Psoas muscle (tissue), 8 donors: ENCODE measurements at regions of chr7 and their contacts with region 1.

Region 1: GRCh38 chr7:88243345-88243909 is 23.6 kb upstream of the SRI start:
- DNase-seq: no peak
- ATAC-seq: peak in 3 of 4 donors; percentile 34 to 61 (median 42)
- H3K4me3 ChIP-seq: no peak overlapping the region
- H3K27ac ChIP-seq: no peak overlapping the region
- H3K4me1 ChIP-seq: no peaks in the 10 kb centered on the region
- H3K27me3 ChIP-seq: no peaks in the 10 kb centered on the region
- CTCF ChIP-seq: peak; percentile 60

Region 2: GRCh38 chr7:88289564-88290025 is 46.2 kb after region 1 on chr7:
- intact Hi-C with region 1: no loop called
- DNase-seq: no peak
- ATAC-seq: no peak
- H3K4me3 ChIP-seq: no peak overlapping the region
- H3K27ac ChIP-seq: no peak overlapping the region
- H3K4me1 ChIP-seq: no peaks in the 10 kb centered on the region
- H3K27me3 ChIP-seq: no peaks in the 10 kb centered on the region
- CTCF ChIP-seq: no peak

Region 3: DNA sequence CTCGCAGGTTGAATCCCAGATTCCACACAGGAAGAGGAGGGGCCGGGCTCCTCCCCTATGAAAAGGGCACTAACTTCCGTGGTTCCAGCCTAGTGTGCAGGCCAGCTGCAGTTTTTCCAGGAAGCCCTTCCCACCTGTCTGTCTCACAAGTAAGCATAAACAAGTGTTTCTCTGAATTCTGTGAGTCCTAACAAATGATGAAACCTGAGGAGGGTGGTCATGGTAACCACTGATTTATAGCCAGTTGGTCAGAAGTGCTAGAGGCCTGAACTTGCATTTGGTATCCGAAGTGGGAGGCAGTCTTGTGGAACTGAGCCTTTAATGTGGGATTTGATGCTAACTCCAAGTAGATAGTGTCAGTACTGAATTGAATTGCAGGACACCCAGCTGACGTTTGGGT is 117.9 kb after region 1 on chr7:
- intact Hi-C with region 1: loop called in 1 of 2 experiments (anchors 5 kb)
- DNase-seq: no peak
- ATAC-seq: no peak
- H3K4me3 ChIP-seq: no peak overlapping the region
- H3K27ac ChIP-seq: no peak overlapping the region
- H3K4me1 ChIP-seq: no peaks in the 10 kb centered on the region
- H3K27me3 ChIP-seq: no peaks in the 10 kb centered on the region
- CTCF ChIP-seq: no peak

Region 4: GRCh38 chr7:88599528-88599927 is 356.1 kb after region 1 on chr7:
- intact Hi-C with region 1: no loop called
- DNase-seq: no peak
- ATAC-seq: no peak
- H3K4me3 ChIP-seq: no peak overlapping the region
- H3K27ac ChIP-seq: no peak overlapping the region
- H3K4me1 ChIP-seq: no peaks in the 10 kb centered on the region
- H3K27me3 ChIP-seq: no peaks in the 10 kb centered on the region
- CTCF ChIP-seq: no peak

Region 5: GRCh38 chr7:89029864-89030263 is 786.4 kb after region 1 on chr7:
- intact Hi-C with region 1: no loop called
- DNase-seq: no peak
- ATAC-seq: no peak
- H3K4me3 ChIP-seq: no peak overlapping the region
- H3K27ac ChIP-seq: no peak overlapping the region
- H3K4me1 ChIP-seq: no peaks in the 10 kb centered on the region
- H3K27me3 ChIP-seq: no peaks in the 10 kb centered on the region
- CTCF ChIP-seq: no peak